ENCODE measurements at regions of chr16 and their contacts with region 1.

Region 1: GRCh38 chr16:66113223-66113622 is 253.3 kb upstream of the CDH5 start:
- DNase-seq: no peak
- ATAC-seq: no peak
- H3K4me3 ChIP-seq: no peak overlapping the region
- H3K27ac ChIP-seq: no peak overlapping the region
- H3K4me1 ChIP-seq: no peaks in the 10 kb centered on the region
- H3K27me3 ChIP-seq: peaks cover 0 to 1% (median 0%) of the 10 kb centered on the region in 7 donors
- CTCF ChIP-seq: no peak

Region 2: GRCh38 chr16:66026211-66026610 is 87.0 kb before region 1 on chr16:
- intact Hi-C with region 1: loop called in 1 of 10 experiments (anchors 5 kb)
- DNase-seq: no peak
- ATAC-seq: peak in 4 of 8 donors; percentile 50 to 79 (median 66)
- H3K4me3 ChIP-seq: no peak overlapping the region
- H3K27ac ChIP-seq: no peak overlapping the region
- H3K4me1 ChIP-seq: peaks cover 0 to 4% (median 0%) of the 10 kb centered on the region in 9 donors
- H3K27me3 ChIP-seq: no peaks in the 10 kb centered on the region
- CTCF ChIP-seq: peak in 6 of 9 donors; percentile 13 to 45 (median 37)

Region 3: DNA sequence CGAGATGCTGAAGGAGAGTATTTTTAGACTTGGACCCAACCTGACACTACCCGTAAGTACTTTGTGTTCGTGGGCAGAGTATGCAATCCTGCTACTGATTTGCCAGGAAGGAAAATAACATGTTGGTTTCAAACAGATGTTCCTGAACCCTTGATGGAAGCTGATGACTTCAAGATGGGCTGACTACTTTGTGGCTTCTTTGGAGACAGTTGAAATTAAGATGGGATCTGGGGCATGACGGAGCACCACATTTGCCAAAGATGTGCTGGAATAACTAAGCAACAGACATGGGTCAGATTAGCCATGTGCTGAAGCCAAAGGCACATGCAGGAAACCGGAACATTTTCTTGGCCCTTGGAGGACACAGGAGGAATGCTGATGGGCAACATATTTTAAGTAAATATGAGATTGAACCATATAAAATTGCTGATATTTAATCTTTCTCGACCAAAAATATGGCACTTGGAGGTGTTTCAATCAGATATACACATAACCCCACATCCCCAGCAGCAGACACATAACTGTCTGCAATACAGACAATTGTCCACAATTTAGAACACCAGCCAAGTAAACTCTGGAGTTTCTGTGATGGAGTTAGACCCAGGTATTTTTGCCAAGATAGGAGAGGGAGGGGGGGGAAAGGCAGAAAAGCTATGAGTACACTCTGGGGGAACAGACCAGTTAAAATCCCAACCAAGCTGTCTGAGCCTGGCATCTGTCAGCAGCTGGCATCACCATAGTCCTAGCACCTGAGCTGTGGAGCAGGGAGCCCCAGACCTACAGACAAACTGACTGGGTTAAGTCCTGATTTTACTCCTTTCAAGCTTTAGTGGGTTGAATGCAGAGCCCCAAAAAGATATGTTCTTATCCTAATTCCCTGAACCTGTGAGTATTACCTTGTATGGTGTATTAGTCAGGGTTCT is 76.2 kb before region 1 on chr16:
- intact Hi-C with region 1: no loop called
- DNase-seq: no peak
- ATAC-seq: peak in 6 of 8 donors; percentile 51 to 82 (median 76)
- H3K4me3 ChIP-seq: no peak overlapping the region
- H3K27ac ChIP-seq: peak overlapping the region in 5 of 10 donors; percentile 31 to 64 (median 49)
- H3K4me1 ChIP-seq: peaks cover 6 to 24% (median 19%) of the 10 kb centered on the region in 9 donors
- H3K27me3 ChIP-seq: no peaks in the 10 kb centered on the region
- CTCF ChIP-seq: no peak

Region 4: GRCh38 chr16:66058172-66058691 is 55.0 kb before region 1 on chr16:
- intact Hi-C with region 1: loop called in 1 of 10 experiments (anchors 5 kb)
- DNase-seq: no peak
- ATAC-seq: no peak
- H3K4me3 ChIP-seq: no peak overlapping the region
- H3K27ac ChIP-seq: no peak overlapping the region
- H3K4me1 ChIP-seq: no peaks in the 10 kb centered on the region
- H3K27me3 ChIP-seq: peaks cover 0 to 7% (median 0%) of the 10 kb centered on the region in 7 donors
- CTCF ChIP-seq: no peak

Region 5: DNA sequence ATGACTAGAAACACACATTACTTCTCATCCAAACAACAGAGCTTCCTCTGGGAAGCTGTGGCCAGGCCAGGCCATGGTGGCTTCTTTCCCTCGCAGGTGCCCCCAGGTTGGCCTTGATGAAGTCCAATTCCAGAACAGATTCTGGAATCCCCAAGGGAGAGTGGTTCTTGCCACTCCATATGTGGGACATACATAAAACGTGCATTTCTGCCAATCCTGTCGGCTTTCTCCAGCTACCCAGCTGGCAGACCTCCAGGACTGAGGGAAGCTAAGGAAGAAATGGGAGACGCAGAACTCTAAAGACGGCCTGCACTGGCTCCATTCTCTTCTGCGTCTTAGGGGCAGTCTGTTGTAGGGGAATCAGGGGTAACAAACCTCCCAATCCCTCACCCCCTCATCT is 34.1 kb after region 1 on chr16:
- intact Hi-C with region 1: no loop called
- DNase-seq: no peak
- ATAC-seq: no peak
- H3K4me3 ChIP-seq: no peak overlapping the region
- H3K27ac ChIP-seq: no peak overlapping the region
- H3K4me1 ChIP-seq: peaks cover 0 to 19% (median 10%) of the 10 kb centered on the region in 9 donors
- H3K27me3 ChIP-seq: no peaks in the 10 kb centered on the region
- CTCF ChIP-seq: no peak

Region 6: GRCh38 chr16:66159987-66160386 is 46.8 kb after region 1 on chr16:
- intact Hi-C with region 1: no loop called
- DNase-seq: no peak
- ATAC-seq: no peak
- H3K4me3 ChIP-seq: no peak overlapping the region
- H3K27ac ChIP-seq: no peak overlapping the region
- H3K4me1 ChIP-seq: no peaks in the 10 kb centered on the region
- H3K27me3 ChIP-seq: peaks cover 0 to 21% (median 0%) of the 10 kb centered on the region in 7 donors
- CTCF ChIP-seq: no peak

Measured in heart right ventricle (tissue), 16 donors.